Gastrocnemius medialis (tissue), 4 donors: ENCODE measurements at regions of chr17 and their contacts with region 1.

Region 1: DNA sequence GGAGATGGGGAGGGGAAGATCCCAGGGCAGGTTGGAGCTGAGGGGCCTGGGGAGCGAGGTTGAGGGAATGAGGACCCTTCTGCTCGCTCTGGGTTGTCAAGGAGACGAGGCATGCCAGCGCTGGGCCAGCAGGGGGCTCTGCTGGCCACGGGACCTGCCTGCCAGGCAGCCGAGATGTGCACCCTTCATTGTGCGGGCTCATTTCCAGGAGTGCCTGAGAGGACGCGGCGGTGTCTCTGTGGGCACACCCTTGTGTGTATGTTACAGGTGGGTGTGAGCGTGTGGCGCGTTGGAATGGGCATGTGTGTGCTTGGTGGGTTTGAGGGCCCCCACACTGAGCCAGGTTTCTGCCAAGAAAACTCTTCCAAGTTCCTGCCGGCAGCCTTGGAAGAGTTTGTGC is 15.9 kb downstream of the ARHGAP23 start:
- DNase-seq: peak; percentile 41 to 72
- ATAC-seq: peak; percentile 79 to 80
- H3K4me3 ChIP-seq: peak overlapping the region in 3 of 4 donors; percentile 5 to 14 (median 5)
- H3K27ac ChIP-seq: peak overlapping the region in 2 of 4 donors; percentile 24 to 48
- H3K4me1 ChIP-seq: peaks cover 29 to 46% of the 10 kb centered on the region in 2 donors
- H3K27me3 ChIP-seq: no peaks in the 10 kb centered on the region
- CTCF ChIP-seq: peak; percentile 84 to 95 (median 93)
- POLR2A ChIP-seq: no peak

Region 2: GRCh38 chr17:38428112-38428642 is 16.0 kb before region 1 on chr17 and contains the start of gene ARHGAP23:
- in situ Hi-C with region 1: no loop called
- intact Hi-C with region 1: loop called (anchors 1 kb)
- DNase-seq: peak in 1 of 2 donors; percentile 42
- ATAC-seq: peak; percentile 54 to 55
- H3K4me3 ChIP-seq: peak within 1 kb of the TSS; percentile 78 to 99 (median 87)
- H3K27ac ChIP-seq: peak within 1 kb of the TSS; percentile 89 to 94 (median 90)
- H3K4me1 ChIP-seq: peaks cover 35 to 45% of the 10 kb centered on the region in 2 donors
- H3K27me3 ChIP-seq: no peaks in the 10 kb centered on the region
- CTCF ChIP-seq: no peak
- POLR2A ChIP-seq: peak; percentile 34
- total RNA-seq, gene ARHGAP23: 8.0 to 22.7 (median 12.1) TPM

Region 3: GRCh38 chr17:38485146-38485468 is 41.0 kb after region 1 on chr17:
- in situ Hi-C with region 1: loop called in 3 of 4 experiments (anchors 5 to 10 kb)
- intact Hi-C with region 1: loop called (anchors 2 kb)
- DNase-seq: no peak
- ATAC-seq: no peak
- H3K4me3 ChIP-seq: no peak overlapping the region
- H3K27ac ChIP-seq: no peak overlapping the region
- H3K4me1 ChIP-seq: peaks cover 0 to 8% of the 10 kb centered on the region in 2 donors
- H3K27me3 ChIP-seq: no peaks in the 10 kb centered on the region
- CTCF ChIP-seq: peak in 1 of 5 experiments; percentile 22
- POLR2A ChIP-seq: no peak

Region 4: GRCh38 chr17:38539386-38539785 is 95.2 kb after region 1 on chr17:
- in situ Hi-C with region 1: no loop called
- intact Hi-C with region 1: no loop called
- DNase-seq: no peak
- ATAC-seq: no peak
- H3K4me3 ChIP-seq: no peak overlapping the region
- H3K27ac ChIP-seq: no peak overlapping the region
- H3K4me1 ChIP-seq: no peaks in the 10 kb centered on the region
- H3K27me3 ChIP-seq: peaks cover 10 to 16% (median 12%) of the 10 kb centered on the region in 3 donors
- CTCF ChIP-seq: no peak
- POLR2A ChIP-seq: no peak